CD8-positive, alpha-beta memory T cell (primary cell): ENCODE measurements at regions of chr1 and their contacts with region 1.

Region 1: GRCh38 chr1:27300341-27301051 is 21.5 kb upstream of the TMEM222 start:
- DNase-seq: peak; percentile 64 to 82 (median 72)
- H3K4me3 ChIP-seq: no peak overlapping the region
- H3K4me3 Mint-ChIP-seq: no peak overlapping the region
- H3K27ac ChIP-seq: no peak overlapping the region
- H3K27ac Mint-ChIP-seq: peak overlapping the region in 4 of 8 donors; percentile 27 to 74 (median 36)
- H3K4me1 ChIP-seq: no peaks in the 10 kb centered on the region
- H3K4me1 Mint-ChIP-seq: peaks cover 0 to 6% (median 4%) of the 10 kb centered on the region in 3 donors
- H3K27me3 ChIP-seq: no peaks in the 10 kb centered on the region
- H3K27me3 Mint-ChIP-seq: no peaks in the 10 kb centered on the region

Region 2: GRCh38 chr1:26602378-26602959 is 698.0 kb before region 1 on chr1:
- CTCF ChIA-PET with region 1: no interaction called
- POLR2A ChIA-PET with region 1: no interaction called
- DNase-seq: peak in 3 of 5 donors; percentile 30 to 61 (median 56)
- H3K4me3 ChIP-seq: no peak overlapping the region
- H3K4me3 Mint-ChIP-seq: no peak overlapping the region
- H3K27ac ChIP-seq: no peak overlapping the region
- H3K27ac Mint-ChIP-seq: no peak overlapping the region
- H3K4me1 ChIP-seq: peaks cover 8% of the 10 kb centered on the region
- H3K4me1 Mint-ChIP-seq: peaks cover 7 to 10% (median 9%) of the 10 kb centered on the region in 3 donors
- H3K27me3 ChIP-seq: no peaks in the 10 kb centered on the region
- H3K27me3 Mint-ChIP-seq: peaks cover 0 to 2% of the 10 kb centered on the region in 2 donors

Region 3: GRCh38 chr1:27234049-27234882 is 66.2 kb before region 1 on chr1 and contains the start of gene WDTC1:
- CTCF ChIA-PET with region 1: no interaction called
- POLR2A ChIA-PET with region 1: no interaction called
- DNase-seq: peak; percentile 97 to 99 (median 99)
- H3K4me3 ChIP-seq: peak within 1 kb of the TSS; percentile 77
- H3K4me3 Mint-ChIP-seq: peak within 1 kb of the TSS; percentile 95 to 99 (median 98)
- H3K27ac ChIP-seq: peak within 1 kb of the TSS; percentile 90
- H3K27ac Mint-ChIP-seq: peak within 1 kb of the TSS; percentile 94 to 100 (median 96)
- H3K4me1 ChIP-seq: peaks cover 25% of the 10 kb centered on the region
- H3K4me1 Mint-ChIP-seq: peaks cover 35 to 44% (median 41%) of the 10 kb centered on the region in 3 donors
- H3K27me3 ChIP-seq: no peaks in the 10 kb centered on the region
- H3K27me3 Mint-ChIP-seq: peaks cover 0 to 6% of the 10 kb centered on the region in 2 donors
- total RNA-seq, gene WDTC1: 22.2 to 22.3 TPM

Region 4: GRCh38 chr1:27257155-27257554 is 43.3 kb before region 1 on chr1:
- CTCF ChIA-PET with region 1: interaction called, 11 read pairs
- POLR2A ChIA-PET with region 1: no interaction called
- DNase-seq: no peak
- H3K4me3 ChIP-seq: no peak overlapping the region
- H3K4me3 Mint-ChIP-seq: no peak overlapping the region
- H3K27ac ChIP-seq: no peak overlapping the region
- H3K27ac Mint-ChIP-seq: peak overlapping the region in 1 of 8 donors; percentile 43
- H3K4me1 ChIP-seq: peaks cover 6% of the 10 kb centered on the region
- H3K4me1 Mint-ChIP-seq: peaks cover 35 to 50% (median 43%) of the 10 kb centered on the region in 3 donors
- H3K27me3 ChIP-seq: no peaks in the 10 kb centered on the region
- H3K27me3 Mint-ChIP-seq: no peaks in the 10 kb centered on the region

Region 5: GRCh38 chr1:27332536-27333281 is 32.2 kb after region 1 on chr1:
- CTCF ChIA-PET with region 1: interaction called, 38 read pairs
- POLR2A ChIA-PET with region 1: no interaction called
- DNase-seq: peak; percentile 46 to 73 (median 59)
- H3K4me3 ChIP-seq: no peak overlapping the region
- H3K4me3 Mint-ChIP-seq: peak overlapping the region in 1 of 7 donors; percentile 20
- H3K27ac ChIP-seq: no peak overlapping the region
- H3K27ac Mint-ChIP-seq: peak overlapping the region in 7 of 8 donors; percentile 9 to 88 (median 71)
- H3K4me1 ChIP-seq: peaks cover 16% of the 10 kb centered on the region
- H3K4me1 Mint-ChIP-seq: peaks cover 27 to 50% (median 30%) of the 10 kb centered on the region in 3 donors
- H3K27me3 ChIP-seq: no peaks in the 10 kb centered on the region
- H3K27me3 Mint-ChIP-seq: no peaks in the 10 kb centered on the region

Region 6: GRCh38 chr1:27357281-27358037 is 57.0 kb after region 1 on chr1:
- CTCF ChIA-PET with region 1: interaction called, 14 read pairs
- POLR2A ChIA-PET with region 1: interaction called, 3 read pairs
- DNase-seq: peak; percentile 72 to 88 (median 82)
- H3K4me3 ChIP-seq: peak overlapping the region; percentile 91
- H3K4me3 Mint-ChIP-seq: peak overlapping the region; percentile 70 to 89 (median 81)
- H3K27ac ChIP-seq: peak overlapping the region; percentile 47
- H3K27ac Mint-ChIP-seq: peak overlapping the region; percentile 59 to 94 (median 80)
- H3K4me1 ChIP-seq: peaks cover 46% of the 10 kb centered on the region
- H3K4me1 Mint-ChIP-seq: peaks cover 44 to 57% (median 53%) of the 10 kb centered on the region in 3 donors
- H3K27me3 ChIP-seq: no peaks in the 10 kb centered on the region
- H3K27me3 Mint-ChIP-seq: peaks cover 0 to 3% of the 10 kb centered on the region in 2 donors